Dorsolateral prefrontal cortex (tissue), 120 donors: ENCODE measurements at regions of chr5 and their contacts with region 1.

Region 1: GRCh38 chr5:142439207-142439860 is 114.5 kb upstream of the SPRY4 start:
- DNase-seq: no peak
- H3K4me3 ChIP-seq: no peak overlapping the region
- H3K27ac ChIP-seq: peak overlapping the region in 2 of 59 donors; percentile 27 to 42
- H3K27me3 ChIP-seq: peaks cover 0 to 3% (median 0%) of the 10 kb centered on the region in 45 donors
- CTCF ChIP-seq: no peak

Region 2: DNA sequence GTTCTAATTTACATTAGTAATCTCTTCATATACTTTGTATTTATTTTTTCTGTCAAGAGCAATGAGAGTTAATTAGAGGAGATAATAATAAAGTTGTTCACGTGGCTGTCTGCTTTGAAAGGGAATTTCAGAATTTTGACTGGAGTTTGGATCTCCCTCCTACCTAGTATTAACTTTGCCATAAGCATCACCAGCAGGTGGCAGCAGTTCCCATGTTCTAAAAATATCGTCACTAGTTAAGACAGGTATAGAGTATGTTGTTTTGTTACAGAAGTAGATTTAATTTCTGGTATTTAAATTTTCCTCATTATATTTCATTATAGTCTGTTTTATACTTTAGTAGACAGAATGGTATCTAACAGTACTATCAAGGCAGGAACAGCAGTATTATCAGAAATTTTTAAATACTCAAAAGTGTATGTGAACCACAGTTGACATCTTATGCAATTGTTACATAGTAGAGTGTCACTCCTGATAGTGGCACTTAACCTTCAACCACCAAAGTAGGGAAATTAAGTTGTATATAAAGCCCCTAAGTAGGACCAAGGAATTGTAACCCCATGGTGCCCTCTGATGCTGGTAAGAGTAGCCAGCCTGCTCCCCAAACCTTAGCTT is 446.9 kb before region 1 on chr5:
- intact Hi-C with region 1: loop called in 1 of 2 experiments (anchors 5 kb)
- DNase-seq: peak in 7 of 10 donors; percentile 54 to 92 (median 70)
- H3K4me3 ChIP-seq: no peak overlapping the region
- H3K27ac ChIP-seq: peak overlapping the region in 2 of 59 donors; percentile 15 to 60
- H3K27me3 ChIP-seq: no peaks in the 10 kb centered on the region
- CTCF ChIP-seq: peak; percentile 70 to 95 (median 87)